ENCODE measurements at regions of chr12 and their contacts with region 1.

Region 1: GRCh38 chr12:47032644-47033043 is 46.8 kb upstream of the PCED1B start:
- DNase-seq: peak; percentile 55
- H3K4me3 ChIP-seq: no peak overlapping the region
- H3K27ac ChIP-seq: no peak overlapping the region
- H3K4me1 ChIP-seq: peaks cover 24% of the 10 kb centered on the region
- H3K27me3 ChIP-seq: no peaks in the 10 kb centered on the region
- CTCF ChIP-seq: peak; percentile 44 to 56

Region 2: DNA sequence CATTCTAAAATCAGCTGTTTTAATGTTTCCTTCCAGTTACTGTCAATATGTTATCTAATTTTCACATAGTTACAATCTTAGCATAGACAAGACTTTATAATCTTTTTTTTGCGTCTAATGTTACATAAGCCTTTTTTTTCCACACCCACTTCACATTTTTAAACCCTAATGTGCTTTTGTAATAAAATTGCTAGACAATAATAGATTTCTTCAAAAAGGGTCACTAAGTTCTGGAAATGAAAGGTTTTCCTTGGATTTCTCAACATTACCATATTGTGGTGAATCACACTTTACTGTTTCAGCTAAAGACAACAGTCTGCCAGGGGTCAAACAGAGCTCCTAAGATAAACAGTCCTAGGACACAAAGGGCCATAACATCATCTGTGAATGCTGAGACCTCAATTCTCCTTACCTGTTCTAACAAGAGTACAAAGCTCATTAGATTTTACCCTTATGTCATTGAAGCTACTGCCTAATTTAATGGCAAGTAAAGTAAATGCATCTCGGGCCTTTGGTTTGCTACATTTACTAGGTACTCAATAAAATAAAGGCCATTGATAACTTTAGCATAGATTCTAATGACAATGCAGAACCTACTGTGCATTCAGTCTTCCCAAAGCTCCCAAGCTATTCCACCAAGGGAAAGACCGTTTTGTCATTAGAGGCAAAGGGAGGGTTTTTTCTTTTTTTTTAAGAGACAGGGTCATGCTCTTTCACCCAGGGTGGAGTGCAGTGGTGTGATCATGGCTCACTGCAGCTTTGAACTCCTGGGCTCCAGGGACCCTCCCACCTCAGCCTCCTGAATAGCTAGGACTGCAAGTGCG is 548.9 kb before region 1 on chr12:
- CTCF ChIA-PET with region 1: no interaction called
- dilution Hi-C with region 1: no loop called
- in situ Hi-C with region 1: no loop called
- intact Hi-C with region 1: no loop called
- DNase-seq: no peak
- H3K4me3 ChIP-seq: no peak overlapping the region
- H3K27ac ChIP-seq: no peak overlapping the region
- H3K4me1 ChIP-seq: peaks cover 15% of the 10 kb centered on the region
- H3K27me3 ChIP-seq: no peaks in the 10 kb centered on the region
- CTCF ChIP-seq: no peak

Region 3: DNA sequence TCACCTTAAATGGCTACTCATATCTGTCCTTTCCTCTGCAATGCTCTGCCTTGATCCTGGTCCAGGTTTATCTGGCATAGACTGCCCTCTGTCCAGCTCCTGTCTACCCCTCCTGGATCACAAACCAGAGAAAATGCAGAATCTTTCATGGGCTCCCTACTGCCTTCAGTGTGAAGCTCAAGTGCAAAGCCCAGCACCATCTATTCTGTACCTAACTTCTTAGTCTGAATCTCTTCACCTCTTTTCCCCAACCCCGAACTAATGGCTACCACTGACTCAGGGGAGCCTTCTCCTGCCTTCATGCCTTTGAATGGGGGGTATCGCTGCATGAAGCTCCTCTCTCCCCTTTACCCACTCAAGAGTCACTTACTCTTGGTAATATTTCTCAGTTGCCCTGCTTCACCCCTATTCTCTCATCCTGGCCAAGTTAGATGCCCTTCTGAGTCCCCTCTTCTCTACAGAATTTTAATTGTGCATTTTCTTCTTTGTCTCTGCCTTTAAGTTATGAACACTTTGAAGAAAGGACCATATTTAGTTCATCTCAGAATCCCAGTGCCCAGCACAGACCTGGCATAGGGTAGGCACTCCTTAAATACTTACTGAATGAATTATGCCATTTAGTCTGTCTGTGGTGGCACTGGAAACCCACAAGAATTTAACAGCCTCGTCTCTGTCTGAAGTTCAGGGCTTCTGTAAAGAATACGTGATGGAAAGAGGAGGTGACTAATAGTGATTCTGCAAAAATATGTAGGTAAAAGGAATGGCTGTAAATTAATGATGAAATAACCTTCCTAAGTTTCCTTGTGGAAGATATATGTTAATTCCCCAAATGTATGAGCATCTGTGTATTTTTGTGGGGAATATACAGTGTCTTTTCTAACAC is 238.4 kb after region 1 on chr12:
- CTCF ChIA-PET with region 1: no interaction called
- dilution Hi-C with region 1: no loop called
- in situ Hi-C with region 1: no loop called
- intact Hi-C with region 1: loop called (anchors 1 kb)
- DNase-seq: peak; percentile 97
- H3K4me3 ChIP-seq: no peak overlapping the region
- H3K27ac ChIP-seq: peak overlapping the region; percentile 99
- H3K4me1 ChIP-seq: peaks cover 68% of the 10 kb centered on the region
- H3K27me3 ChIP-seq: no peaks in the 10 kb centered on the region
- CTCF ChIP-seq: no peak

Region 4: DNA sequence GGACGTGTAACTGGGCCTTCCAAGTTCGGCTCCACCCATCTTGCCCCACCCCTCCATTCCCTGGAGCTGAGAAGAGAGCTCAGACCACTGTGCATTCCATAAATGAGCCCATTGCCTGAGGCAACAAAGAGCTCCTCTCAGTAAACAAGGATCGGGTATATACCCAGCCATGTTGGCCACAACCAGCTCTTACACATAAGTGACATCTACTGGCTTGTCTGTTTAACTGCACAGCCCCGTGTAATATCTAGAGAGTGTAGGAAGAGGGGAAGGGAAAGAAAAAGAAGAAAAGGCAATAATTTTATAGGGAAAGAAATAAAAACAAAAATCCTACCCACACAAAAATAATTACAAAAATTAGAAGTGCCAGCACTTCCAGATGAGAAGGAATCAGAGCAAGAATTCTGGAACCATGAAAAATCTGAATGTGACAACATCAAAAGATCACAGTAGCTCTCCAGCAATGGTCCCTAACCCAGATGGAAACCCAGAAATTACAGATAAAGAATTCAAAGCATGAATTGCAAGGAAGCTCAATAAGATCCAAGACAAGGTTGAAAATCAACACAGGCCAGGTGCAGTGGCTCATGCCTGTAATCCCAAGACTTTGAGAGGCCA is 365.1 kb after region 1 on chr12:
- CTCF ChIA-PET with region 1: interaction called, 20 read pairs
- dilution Hi-C with region 1: no loop called
- in situ Hi-C with region 1: loop called (anchors 5 kb)
- intact Hi-C with region 1: loop called (anchors 1 kb)
- DNase-seq: peak; percentile 74
- H3K4me3 ChIP-seq: no peak overlapping the region
- H3K27ac ChIP-seq: no peak overlapping the region
- H3K4me1 ChIP-seq: peaks cover 17% of the 10 kb centered on the region
- H3K27me3 ChIP-seq: no peaks in the 10 kb centered on the region
- CTCF ChIP-seq: peak; percentile 77 to 83

Region 5: GRCh38 chr12:47547085-47547484 is 514.4 kb after region 1 on chr12:
- CTCF ChIA-PET with region 1: no interaction called
- dilution Hi-C with region 1: no loop called
- in situ Hi-C with region 1: no loop called
- intact Hi-C with region 1: loop called (anchors 5 kb)
- DNase-seq: peak; percentile 24
- H3K4me3 ChIP-seq: no peak overlapping the region
- H3K27ac ChIP-seq: no peak overlapping the region
- H3K4me1 ChIP-seq: peaks cover 8% of the 10 kb centered on the region
- H3K27me3 ChIP-seq: no peaks in the 10 kb centered on the region
- CTCF ChIP-seq: peak; percentile 68 to 71

Region 6: GRCh38 chr12:47574252-47575021 is 541.8 kb after region 1 on chr12:
- CTCF ChIA-PET with region 1: no interaction called
- dilution Hi-C with region 1: no loop called
- in situ Hi-C with region 1: no loop called
- intact Hi-C with region 1: no loop called
- DNase-seq: no peak
- H3K4me3 ChIP-seq: no peak overlapping the region
- H3K27ac ChIP-seq: no peak overlapping the region
- H3K4me1 ChIP-seq: no peaks in the 10 kb centered on the region
- H3K27me3 ChIP-seq: peaks cover 2% of the 10 kb centered on the region
- CTCF ChIP-seq: no peak

Region 7: DNA sequence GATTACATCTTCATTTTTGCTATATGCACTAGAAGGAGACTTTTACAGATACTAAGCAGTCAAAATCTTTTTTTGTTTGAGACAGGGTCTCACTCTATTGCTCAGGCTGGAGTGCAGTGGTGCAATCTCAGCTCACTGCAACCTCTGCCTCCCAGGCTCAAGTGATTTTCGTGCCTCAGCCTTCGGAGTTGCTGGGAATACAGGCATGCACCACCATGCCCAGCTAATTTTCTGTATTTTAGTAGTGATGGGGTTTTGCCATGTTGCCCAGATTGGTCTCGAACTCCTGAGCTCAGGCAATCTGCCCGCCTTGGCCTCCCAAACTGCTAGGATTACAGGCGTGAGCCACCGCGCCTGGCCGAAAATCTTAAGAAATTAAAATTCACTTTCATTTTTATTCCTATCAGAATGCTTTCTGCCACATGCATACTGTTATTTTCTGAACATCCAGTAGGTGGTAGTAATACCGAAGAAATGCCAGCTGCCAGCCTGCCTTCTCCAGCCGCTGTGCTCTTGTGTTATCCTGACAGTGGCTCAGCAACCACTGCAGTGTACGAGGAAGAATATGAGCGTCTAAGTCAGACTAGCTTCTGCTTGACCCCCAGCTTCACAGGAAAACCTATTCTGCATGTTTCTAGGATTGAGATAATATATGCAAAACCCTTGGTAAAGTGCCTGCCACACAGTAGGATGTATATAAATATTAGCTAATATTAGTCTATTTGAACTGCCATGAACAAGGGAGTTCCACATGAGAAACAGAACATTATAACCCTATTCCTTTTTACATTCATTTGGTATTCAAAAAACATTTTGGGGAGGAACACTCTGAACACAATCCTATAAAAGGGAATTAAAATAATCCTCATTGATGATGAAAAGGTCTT is 619.0 kb after region 1 on chr12:
- CTCF ChIA-PET with region 1: no interaction called
- dilution Hi-C with region 1: no loop called
- in situ Hi-C with region 1: loop called in 1 of 2 experiments (anchors 25 kb)
- intact Hi-C with region 1: no loop called
- DNase-seq: peak; percentile 55
- H3K4me3 ChIP-seq: no peak overlapping the region
- H3K27ac ChIP-seq: no peak overlapping the region
- H3K4me1 ChIP-seq: no peaks in the 10 kb centered on the region
- H3K27me3 ChIP-seq: no peaks in the 10 kb centered on the region
- CTCF ChIP-seq: peak; percentile 63 to 66

Region 8: DNA sequence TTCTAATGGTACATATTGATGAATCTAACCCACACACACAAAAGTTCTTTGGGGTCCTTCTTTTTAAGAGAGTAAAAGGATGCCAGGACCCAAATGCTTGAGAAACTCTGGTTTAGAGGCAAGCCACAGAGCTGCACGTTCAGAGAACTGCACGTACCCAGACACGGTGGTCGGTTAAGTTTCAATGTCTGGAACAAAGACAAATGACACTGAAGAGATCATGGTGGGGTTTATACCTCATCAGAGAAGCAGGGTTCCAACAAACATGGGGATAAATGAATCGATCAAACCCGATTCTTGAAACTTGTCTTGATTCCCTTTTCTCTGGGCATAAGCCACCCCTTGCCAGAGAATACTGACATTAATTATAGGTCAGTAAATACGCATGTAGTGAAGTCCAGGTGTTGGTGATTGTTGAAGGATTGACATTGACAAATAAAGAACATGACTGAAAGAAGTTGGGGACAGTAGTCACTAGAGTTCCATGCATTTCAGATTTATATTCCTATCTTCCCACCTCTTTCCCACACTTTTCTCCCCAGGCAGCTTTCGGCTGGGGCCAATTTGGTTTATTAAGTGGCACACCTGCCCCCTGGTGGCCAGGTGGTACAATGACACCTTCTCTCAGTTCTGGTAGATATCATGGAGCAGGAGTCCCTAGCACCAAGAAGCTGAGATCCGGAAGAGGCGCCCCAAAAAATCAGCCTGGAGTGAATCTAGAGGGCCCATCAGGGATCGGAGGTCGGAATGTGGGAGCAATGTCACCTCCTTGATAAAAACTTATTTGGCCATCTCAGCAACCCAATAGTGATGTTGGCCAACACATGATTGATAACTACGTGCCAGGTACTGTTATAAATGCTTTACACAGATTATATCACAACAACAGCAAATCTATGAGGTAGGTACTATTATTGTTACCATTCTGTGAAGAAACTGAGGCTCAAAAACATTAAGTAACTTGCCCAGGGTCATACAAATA is 804.8 kb after region 1 on chr12:
- CTCF ChIA-PET with region 1: no interaction called
- dilution Hi-C with region 1: no loop called
- in situ Hi-C with region 1: no loop called
- intact Hi-C with region 1: loop called (anchors 2 kb)
- DNase-seq: peak; percentile 62
- H3K4me3 ChIP-seq: no peak overlapping the region
- H3K27ac ChIP-seq: no peak overlapping the region
- H3K4me1 ChIP-seq: peaks cover 17% of the 10 kb centered on the region
- H3K27me3 ChIP-seq: no peaks in the 10 kb centered on the region
- CTCF ChIP-seq: peak; percentile 85 to 88

Measured in mammary epithelial cell (primary cell).